ENCODE measurements at regions of chr19 and their contacts with region 1.

Region 1: GRCh38 chr19:46634045-46634655 is 1.9 kb downstream of the GNG8 start:
- DNase-seq: peak; percentile 87 to 98
- H3K4me3 ChIP-seq: peak overlapping the region; percentile 47 to 97 (median 58)
- H3K27ac ChIP-seq: no peak overlapping the region
- H3K4me1 ChIP-seq: peaks cover 0 to 24% (median 15%) of the 10 kb centered on the region in 4 experiments; a peak in 6 of 7 replicates
- H3K27me3 ChIP-seq: peaks cover 5 to 50% (median 42%) of the 10 kb centered on the region in 4 experiments
- CTCF ChIP-seq: no peak
- EP300 ChIP-seq: no peak
- POLR2A ChIP-seq: no peak
- RAD21 ChIP-seq: no peak

Region 2: GRCh38 chr19:46614114-46614722 is 19.9 kb before region 1 on chr19:
- CTCF ChIA-PET with region 1: interaction called, 309 read pairs
- POLR2A ChIA-PET with region 1: interaction called, 8 read pairs
- DNase-seq: peak; percentile 58 to 97
- H3K4me3 ChIP-seq: no peak overlapping the region
- H3K27ac ChIP-seq: no peak overlapping the region
- H3K4me1 ChIP-seq: no peaks in the 10 kb centered on the region
- H3K27me3 ChIP-seq: no peaks in the 10 kb centered on the region
- CTCF ChIP-seq: peak; percentile 85 to 91 (median 91)
- EP300 ChIP-seq: no peak
- POLR2A ChIP-seq: no peak
- RAD21 ChIP-seq: peak; percentile 75 to 88

Region 3: DNA sequence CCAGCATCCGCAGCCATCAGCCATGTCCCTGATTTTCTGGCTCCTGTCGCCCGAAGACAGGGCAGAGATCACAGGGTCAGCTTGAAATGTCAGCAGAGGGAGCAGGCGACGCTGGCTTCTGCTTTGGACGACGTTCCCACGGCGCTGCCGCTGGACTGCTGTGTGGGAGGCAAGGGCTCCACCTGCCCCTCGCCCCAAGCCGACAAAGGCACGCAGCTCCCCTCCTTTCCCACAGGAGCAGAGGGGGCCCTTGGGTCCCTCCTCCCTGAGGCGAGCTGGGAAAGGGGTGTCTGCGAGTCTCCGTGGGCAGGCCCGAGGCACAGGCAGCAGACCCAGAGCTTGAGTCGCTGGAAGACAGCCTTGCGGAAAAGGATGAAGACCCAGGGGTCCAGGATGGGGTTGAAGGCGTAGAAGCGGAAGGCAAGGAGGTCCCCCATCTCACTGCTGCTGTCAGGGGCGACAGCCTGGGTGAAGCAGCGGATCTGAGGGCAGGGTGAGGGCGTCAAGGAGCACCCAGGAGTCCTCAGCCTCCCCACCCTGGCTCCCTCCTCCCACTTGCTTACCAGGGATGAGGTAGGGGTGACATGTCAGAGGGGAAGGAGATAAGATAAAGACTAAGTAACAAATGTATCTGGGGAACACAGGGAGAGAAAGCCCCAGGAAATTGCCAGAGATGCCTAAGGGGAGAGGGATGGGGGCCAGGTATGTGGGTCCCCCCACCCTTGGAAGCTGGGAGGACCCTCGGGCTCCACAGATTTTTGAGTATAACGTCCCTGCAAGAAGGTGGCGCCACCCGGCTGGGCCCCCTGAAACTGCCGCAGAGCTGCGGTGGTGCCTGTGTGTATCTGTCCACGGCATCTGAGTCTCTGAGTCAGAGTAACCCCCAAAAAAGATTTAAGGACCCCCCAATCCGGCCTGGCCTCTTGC is 12.7 kb before region 1 on chr19:
- CTCF ChIA-PET with region 1: interaction called, 309 read pairs
- POLR2A ChIA-PET with region 1: interaction called, 10 read pairs
- DNase-seq: no peak
- H3K4me3 ChIP-seq: no peak overlapping the region
- H3K27ac ChIP-seq: no peak overlapping the region
- H3K4me1 ChIP-seq: peaks cover 0 to 10% (median 4%) of the 10 kb centered on the region in 4 experiments; a peak in 4 of 7 replicates
- H3K27me3 ChIP-seq: no peaks in the 10 kb centered on the region
- CTCF ChIP-seq: peak; percentile 36 to 69 (median 45)
- EP300 ChIP-seq: no peak
- POLR2A ChIP-seq: no peak
- RAD21 ChIP-seq: peak; percentile 21 to 45; a peak in 3 of 4 replicates

Region 4: GRCh38 chr19:46728693-46729676 is 94.8 kb after region 1 on chr19:
- CTCF ChIA-PET with region 1: no interaction called
- POLR2A ChIA-PET with region 1: no interaction called
- DNase-seq: peak in 1 of 2 experiments; percentile 90
- H3K4me3 ChIP-seq: no peak overlapping the region
- H3K27ac ChIP-seq: no peak overlapping the region
- H3K4me1 ChIP-seq: peaks cover 0 to 3% (median 0%) of the 10 kb centered on the region in 4 experiments; a peak in 4 of 7 replicates
- H3K27me3 ChIP-seq: no peaks in the 10 kb centered on the region
- CTCF ChIP-seq: peak; percentile 81 to 90 (median 89)
- EP300 ChIP-seq: no peak
- POLR2A ChIP-seq: no peak; a peak in 1 of 3 replicates
- RAD21 ChIP-seq: peak; percentile 74 to 81